A549 (cell line): ENCODE measurements at regions of chr2 and their contacts with region 1.

Region 1: DNA sequence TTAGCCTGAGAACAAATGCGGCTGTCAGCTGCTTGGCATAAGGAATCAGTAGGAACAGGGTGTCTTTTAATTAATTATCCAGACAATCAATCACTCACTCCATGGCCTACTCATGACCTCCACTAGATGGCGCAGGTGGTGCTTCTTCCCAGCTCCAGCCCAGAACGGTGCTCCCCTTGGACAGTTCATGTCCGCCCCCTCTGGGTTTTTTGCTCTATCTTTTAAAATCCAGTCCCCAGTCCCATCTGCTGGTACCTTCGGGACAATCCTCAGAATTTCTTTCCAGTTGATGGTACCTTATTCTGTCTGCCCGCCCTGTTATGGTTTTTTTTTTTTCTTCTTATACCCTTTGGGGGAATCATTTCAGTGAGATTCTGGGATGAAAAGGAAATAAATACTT is 99.8 kb downstream of the CACNB4 start:
- DNase-seq: peak; percentile 65 to 66
- ATAC-seq: peak; percentile 89 to 98
- H3K4me3 ChIP-seq: no peak overlapping the region
- H3K27ac ChIP-seq: no peak overlapping the region
- H3K4me1 ChIP-seq: no peaks in the 10 kb centered on the region
- CTCF ChIP-seq: peak; percentile 73
- EP300 ChIP-seq: no peak
- POLR2A ChIP-seq: no peak
- RAD21 ChIP-seq: peak; percentile 49 to 60; a peak in 4 of 5 replicates

Region 2: GRCh38 chr2:151891566-151892194 is 107.4 kb before region 1 on chr2:
- CTCF ChIA-PET with region 1: no interaction called
- POLR2A ChIA-PET with region 1: no interaction called
- DNase-seq: no peak
- ATAC-seq: peak; percentile 64 to 78; a peak in 3 of 6 replicates
- H3K4me3 ChIP-seq: no peak overlapping the region
- H3K27ac ChIP-seq: no peak overlapping the region
- H3K4me1 ChIP-seq: no peaks in the 10 kb centered on the region
- CTCF ChIP-seq: no peak
- EP300 ChIP-seq: no peak
- POLR2A ChIP-seq: no peak
- RAD21 ChIP-seq: no peak

Region 3: GRCh38 chr2:151983221-151983620 is 15.8 kb before region 1 on chr2:
- CTCF ChIA-PET with region 1: interaction called, 15 read pairs
- POLR2A ChIA-PET with region 1: no interaction called
- DNase-seq: no peak
- ATAC-seq: no peak
- H3K4me3 ChIP-seq: no peak overlapping the region
- H3K27ac ChIP-seq: no peak overlapping the region
- H3K4me1 ChIP-seq: no peaks in the 10 kb centered on the region
- CTCF ChIP-seq: no peak
- EP300 ChIP-seq: no peak
- POLR2A ChIP-seq: no peak
- RAD21 ChIP-seq: no peak

Region 4: DNA sequence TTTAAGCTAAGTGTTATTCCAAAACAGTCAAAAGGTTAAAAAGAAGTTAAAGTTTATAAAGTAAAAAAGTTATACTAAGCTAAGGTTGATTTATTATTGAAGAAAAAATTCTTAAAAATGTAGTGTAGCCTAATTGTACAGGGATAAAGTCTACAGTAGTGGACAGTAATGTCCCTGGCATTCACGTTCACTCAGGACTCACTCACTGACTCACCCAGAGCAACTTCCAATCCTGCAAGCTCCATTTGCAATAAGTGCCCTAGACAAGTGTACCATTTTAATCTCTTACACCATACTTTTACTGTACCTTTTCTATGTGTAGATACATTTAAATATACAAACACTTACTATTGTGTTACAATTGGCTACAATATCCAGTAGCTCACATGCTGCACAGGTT is 13.6 kb after region 1 on chr2:
- CTCF ChIA-PET with region 1: interaction called, 14 read pairs
- POLR2A ChIA-PET with region 1: no interaction called
- DNase-seq: no peak
- ATAC-seq: peak in 1 of 2 experiments; percentile 42; a peak in 2 of 6 replicates
- H3K4me3 ChIP-seq: no peak overlapping the region
- H3K27ac ChIP-seq: no peak overlapping the region
- H3K4me1 ChIP-seq: no peaks in the 10 kb centered on the region
- CTCF ChIP-seq: no peak
- EP300 ChIP-seq: no peak
- POLR2A ChIP-seq: no peak
- RAD21 ChIP-seq: no peak